Activated naive CD4-positive, alpha-beta T cell treated with anti-CD3 and anti-CD28 coated beads for 36 hours (primary cell): ENCODE measurements at regions of chr1 and their contacts with region 1.

Region 1: DNA sequence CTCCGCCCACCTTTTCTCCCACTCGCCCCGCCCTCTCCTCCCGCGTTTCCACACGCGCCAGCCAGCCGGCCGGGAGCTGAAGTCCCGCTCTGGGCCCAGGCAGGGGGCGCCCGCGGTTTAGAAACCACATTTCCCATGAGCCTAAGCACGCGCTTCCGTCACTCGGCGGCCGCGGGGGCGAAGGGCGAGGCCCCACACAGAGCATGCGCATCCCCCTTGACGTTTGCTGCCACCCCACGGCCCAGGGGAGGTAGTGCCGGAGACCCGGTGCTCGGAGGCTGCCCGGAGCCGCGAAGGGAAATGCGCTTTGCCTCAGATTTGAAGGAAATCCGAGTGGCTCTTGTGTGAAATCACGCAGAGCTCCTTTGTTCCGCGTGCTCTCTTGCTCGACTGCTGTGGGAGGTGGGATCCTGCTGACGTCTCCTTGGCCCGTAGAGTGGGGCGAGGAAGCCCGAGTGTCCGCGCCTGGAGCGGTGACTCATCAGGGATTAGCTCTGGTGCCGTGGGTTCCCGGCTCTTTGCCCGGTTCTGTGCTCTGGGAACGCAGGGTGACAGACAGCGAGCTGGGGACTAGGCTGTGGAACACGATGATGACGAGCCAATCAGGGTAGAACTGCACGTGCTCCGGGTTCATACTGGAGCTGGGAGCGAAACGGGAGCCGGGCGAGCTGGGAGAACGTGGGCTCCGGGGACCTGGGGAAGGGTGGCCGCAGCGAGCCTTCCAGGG is 407 bp upstream of the B3GALNT2 start:
- DNase-seq: peak; percentile 99
- H3K4me3 Mint-ChIP-seq: peak overlapping the region; percentile 97
- H3K27ac Mint-ChIP-seq: peak overlapping the region; percentile 97
- H3K4me1 Mint-ChIP-seq: peaks cover 31% of the 10 kb centered on the region
- H3K27me3 Mint-ChIP-seq: no peaks in the 10 kb centered on the region

Region 2: GRCh38 chr1:234427950-234428642 is 1076.6 kb before region 1 on chr1:
- CTCF ChIA-PET with region 1: no interaction called
- intact Hi-C with region 1: no loop called
- DNase-seq: no peak
- H3K4me3 Mint-ChIP-seq: no peak overlapping the region
- H3K27ac Mint-ChIP-seq: no peak overlapping the region
- H3K4me1 Mint-ChIP-seq: no peaks in the 10 kb centered on the region
- H3K27me3 Mint-ChIP-seq: no peaks in the 10 kb centered on the region

Region 3: DNA sequence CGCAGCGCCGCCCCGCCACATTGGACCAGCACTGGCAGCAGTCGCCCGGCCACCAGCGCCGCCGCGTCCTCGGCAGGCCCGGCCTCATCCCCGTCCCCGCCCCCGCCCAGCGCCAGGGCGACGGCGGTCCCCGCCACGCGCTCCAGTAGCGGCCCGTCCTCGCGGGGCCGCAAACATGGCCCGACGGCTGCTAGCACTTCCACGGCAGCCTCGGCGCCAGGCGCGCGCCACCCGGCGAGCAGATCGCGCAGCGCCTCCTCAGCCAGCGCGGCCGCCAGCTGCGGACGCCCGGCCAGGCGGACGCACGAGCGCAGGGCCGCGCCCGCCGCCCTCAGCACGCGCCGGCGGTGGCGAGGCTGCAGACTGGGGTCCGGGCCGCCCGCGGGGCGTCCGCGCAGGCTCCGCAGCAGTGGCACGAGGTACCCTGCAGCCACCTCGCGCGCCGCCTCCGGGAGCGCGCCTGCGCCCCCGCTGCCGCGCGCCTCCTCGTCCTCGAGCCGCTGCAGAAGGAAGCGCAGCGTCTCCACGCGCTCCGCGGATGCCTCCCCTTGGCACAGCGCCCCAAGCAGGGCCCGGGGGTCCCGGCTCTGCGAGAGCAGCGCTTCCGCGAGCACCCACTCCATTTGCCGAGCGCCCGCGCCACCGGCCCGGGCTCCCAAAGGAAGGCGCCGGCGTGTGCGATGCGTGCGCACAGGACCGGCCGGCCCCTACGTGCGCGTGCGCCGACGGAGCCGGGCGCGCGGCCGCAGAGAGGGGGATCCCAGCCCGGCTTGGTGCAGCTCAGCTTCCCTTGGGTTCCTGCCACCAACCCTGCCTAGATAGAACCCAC is 1026.0 kb before region 1 on chr1 and contains the start of gene TARBP1:
- CTCF ChIA-PET with region 1: no interaction called
- intact Hi-C with region 1: loop called (anchors 2 kb)
- DNase-seq: peak; percentile 77
- H3K4me3 Mint-ChIP-seq: peak within 1 kb of the TSS; percentile 79
- H3K27ac Mint-ChIP-seq: peak within 1 kb of the TSS; percentile 46
- H3K4me1 Mint-ChIP-seq: peaks cover 49% of the 10 kb centered on the region
- H3K27me3 Mint-ChIP-seq: peaks cover 12% of the 10 kb centered on the region
- total RNA-seq, gene TARBP1: 40.2 to 41.6 TPM

Region 4: DNA sequence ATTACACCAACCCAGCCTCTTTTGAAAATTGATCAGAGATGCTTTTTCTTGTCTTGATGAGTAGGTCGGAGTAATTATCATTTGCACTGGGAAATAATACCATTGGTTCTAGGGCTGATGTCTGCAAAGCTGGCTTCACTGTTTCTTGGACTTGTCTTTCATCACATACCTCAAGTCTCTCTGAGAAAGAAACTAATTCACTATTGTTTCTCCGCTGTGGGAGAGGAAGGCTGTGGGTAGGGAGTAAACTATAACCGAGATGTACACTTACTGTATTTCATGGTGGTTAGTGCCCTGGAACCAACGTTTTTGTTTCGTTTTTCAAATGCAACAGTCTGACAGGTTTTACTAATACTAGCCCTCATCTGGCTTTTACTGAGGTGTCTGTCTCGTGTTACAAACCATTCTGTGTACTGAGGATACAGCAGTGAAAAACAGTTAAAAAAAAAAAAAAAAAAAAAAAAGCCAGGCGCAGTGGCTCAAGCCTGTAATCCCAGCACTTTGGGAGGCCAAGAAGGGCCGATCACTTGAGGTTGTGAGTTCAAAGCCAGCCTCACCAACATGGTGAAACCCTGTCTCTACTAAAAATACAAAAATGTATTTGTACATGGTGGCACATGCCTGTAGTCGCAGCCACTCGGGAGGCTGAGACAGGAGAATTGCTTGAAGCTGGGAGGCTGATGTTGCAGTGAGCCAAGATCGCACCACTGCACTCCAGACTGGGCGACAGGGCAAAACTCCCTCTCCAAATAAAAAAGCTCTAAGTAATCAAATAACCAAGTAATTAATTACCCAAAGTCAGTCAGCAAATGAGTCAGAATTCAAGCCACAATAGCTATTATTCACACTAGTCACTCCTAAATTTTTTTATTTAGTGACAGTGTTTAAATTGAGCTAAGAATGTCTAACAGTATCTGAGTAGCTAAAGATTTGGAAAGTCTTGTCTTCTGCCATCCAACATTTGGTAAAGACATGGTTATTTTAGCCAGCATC is 399.3 kb before region 1 on chr1:
- CTCF ChIA-PET with region 1: no interaction called
- intact Hi-C with region 1: loop called (anchors 2 kb)
- DNase-seq: no peak
- H3K4me3 Mint-ChIP-seq: no peak overlapping the region
- H3K27ac Mint-ChIP-seq: no peak overlapping the region
- H3K4me1 Mint-ChIP-seq: peaks cover 44% of the 10 kb centered on the region
- H3K27me3 Mint-ChIP-seq: no peaks in the 10 kb centered on the region

Region 5: GRCh38 chr1:235160957-235161684 is 343.5 kb before region 1 on chr1 and contains the start of gene RBM34:
- CTCF ChIA-PET with region 1: interaction called, 4 read pairs
- intact Hi-C with region 1: loop called (anchors 1 kb)
- DNase-seq: peak; percentile 94
- H3K4me3 Mint-ChIP-seq: peak within 1 kb of the TSS; percentile 100
- H3K27ac Mint-ChIP-seq: peak within 1 kb of the TSS; percentile 99
- H3K4me1 Mint-ChIP-seq: peaks cover 26% of the 10 kb centered on the region
- H3K27me3 Mint-ChIP-seq: no peaks in the 10 kb centered on the region
- total RNA-seq, gene RBM34: 104 TPM

Region 6: GRCh38 chr1:235697508-235697907 is 192.8 kb after region 1 on chr1:
- CTCF ChIA-PET with region 1: no interaction called
- intact Hi-C with region 1: loop called (anchors 1 kb)
- DNase-seq: peak; percentile 37
- H3K4me3 Mint-ChIP-seq: no peak overlapping the region
- H3K27ac Mint-ChIP-seq: peak overlapping the region; percentile 82
- H3K4me1 Mint-ChIP-seq: peaks cover 18% of the 10 kb centered on the region
- H3K27me3 Mint-ChIP-seq: no peaks in the 10 kb centered on the region

Region 7: GRCh38 chr1:235917267-235917811 is 412.7 kb after region 1 on chr1:
- CTCF ChIA-PET with region 1: no interaction called
- intact Hi-C with region 1: no loop called
- DNase-seq: peak; percentile 88
- H3K4me3 Mint-ChIP-seq: no peak overlapping the region
- H3K27ac Mint-ChIP-seq: peak overlapping the region; percentile 82
- H3K4me1 Mint-ChIP-seq: peaks cover 29% of the 10 kb centered on the region
- H3K27me3 Mint-ChIP-seq: no peaks in the 10 kb centered on the region

Region 8: GRCh38 chr1:236269439-236269838 is 764.8 kb after region 1 on chr1:
- CTCF ChIA-PET with region 1: no interaction called
- intact Hi-C with region 1: no loop called
- DNase-seq: no peak
- H3K4me3 Mint-ChIP-seq: no peak overlapping the region
- H3K27ac Mint-ChIP-seq: no peak overlapping the region
- H3K4me1 Mint-ChIP-seq: peaks cover 15% of the 10 kb centered on the region
- H3K27me3 Mint-ChIP-seq: no peaks in the 10 kb centered on the region